ENCODE measurements at regions of chr19 and their contacts with region 1.

Region 1: DNA sequence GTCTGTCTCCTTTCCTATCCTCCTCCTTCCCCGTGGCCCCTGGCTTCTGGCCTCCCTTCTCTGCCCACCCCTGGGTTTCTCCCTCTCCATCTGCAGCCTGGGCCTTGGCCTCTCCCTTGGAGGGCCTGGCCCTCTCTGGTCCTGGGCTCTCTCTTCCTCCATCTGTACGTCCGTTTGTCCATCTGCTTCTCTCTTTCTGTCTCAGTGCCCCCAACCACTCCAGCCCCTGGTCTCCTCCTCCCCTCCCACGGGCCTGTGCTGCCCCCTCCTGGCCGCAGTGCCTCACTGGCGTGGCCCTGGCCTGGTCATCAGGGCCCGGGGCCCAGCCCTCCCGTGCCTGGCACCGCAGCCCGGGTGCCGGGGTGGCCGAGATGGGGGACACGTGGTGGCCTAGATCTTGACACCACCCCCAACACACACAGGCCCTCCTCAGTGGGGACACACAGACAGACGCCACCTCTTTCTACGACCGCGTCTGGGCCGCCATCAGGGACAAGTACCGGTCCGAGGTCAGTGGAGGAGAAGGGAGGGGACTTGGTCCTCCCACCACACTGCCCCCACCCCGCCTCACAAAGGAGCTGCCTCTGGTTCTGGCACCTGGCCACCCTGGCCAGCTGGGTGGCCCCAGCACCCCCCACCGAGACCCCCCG is 11.3 kb downstream of the PRKCSH start:
- DNase-seq: peak in 7 of 9 donors; percentile 26 to 61 (median 44)
- ATAC-seq: peak; percentile 80
- H3K4me3 ChIP-seq: no peak overlapping the region
- H3K4me3 Mint-ChIP-seq: no peak overlapping the region
- H3K27ac ChIP-seq: no peak overlapping the region
- H3K27ac Mint-ChIP-seq: peak overlapping the region in 1 of 9 donors; percentile 36
- H3K4me1 ChIP-seq: no peaks in the 10 kb centered on the region
- H3K4me1 Mint-ChIP-seq: peaks cover 0 to 5% (median 3%) of the 10 kb centered on the region in 7 donors
- H3K27me3 ChIP-seq: no peaks in the 10 kb centered on the region
- H3K27me3 Mint-ChIP-seq: no peaks in the 10 kb centered on the region

Region 2: GRCh38 chr19:11293433-11294389 is 153.1 kb before region 1 on chr19:
- CTCF ChIA-PET with region 1: interaction called, 5 read pairs
- POLR2A ChIA-PET with region 1: no interaction called
- intact Hi-C with region 1: loop called (anchors 1 kb)
- DNase-seq: peak; percentile 55 to 88 (median 75)
- ATAC-seq: peak; percentile 98
- H3K4me3 ChIP-seq: no peak overlapping the region
- H3K4me3 Mint-ChIP-seq: peak overlapping the region in 7 of 10 donors; percentile 13 to 69 (median 60)
- H3K27ac ChIP-seq: no peak overlapping the region
- H3K27ac Mint-ChIP-seq: peak overlapping the region in 2 of 9 donors; percentile 31 to 80
- H3K4me1 ChIP-seq: peaks cover 0 to 4% of the 10 kb centered on the region in 2 donors
- H3K4me1 Mint-ChIP-seq: peaks cover 8 to 11% (median 9%) of the 10 kb centered on the region in 7 donors
- H3K27me3 ChIP-seq: no peaks in the 10 kb centered on the region
- H3K27me3 Mint-ChIP-seq: peaks cover 5 to 69% (median 15%) of the 10 kb centered on the region in 5 donors

Region 3: GRCh38 chr19:11405846-11406643 is 40.7 kb before region 1 on chr19:
- CTCF ChIA-PET with region 1: interaction called, 10 read pairs
- POLR2A ChIA-PET with region 1: no interaction called
- intact Hi-C with region 1: no loop called
- DNase-seq: peak in 5 of 9 donors; percentile 29 to 46 (median 33)
- ATAC-seq: peak; percentile 68
- H3K4me3 ChIP-seq: no peak overlapping the region
- H3K4me3 Mint-ChIP-seq: no peak overlapping the region
- H3K27ac ChIP-seq: no peak overlapping the region
- H3K27ac Mint-ChIP-seq: no peak overlapping the region
- H3K4me1 ChIP-seq: no peaks in the 10 kb centered on the region
- H3K4me1 Mint-ChIP-seq: peaks cover 0 to 5% (median 0%) of the 10 kb centered on the region in 7 donors
- H3K27me3 ChIP-seq: no peaks in the 10 kb centered on the region
- H3K27me3 Mint-ChIP-seq: peaks cover 4 to 20% (median 7%) of the 10 kb centered on the region in 5 donors

Region 4: DNA sequence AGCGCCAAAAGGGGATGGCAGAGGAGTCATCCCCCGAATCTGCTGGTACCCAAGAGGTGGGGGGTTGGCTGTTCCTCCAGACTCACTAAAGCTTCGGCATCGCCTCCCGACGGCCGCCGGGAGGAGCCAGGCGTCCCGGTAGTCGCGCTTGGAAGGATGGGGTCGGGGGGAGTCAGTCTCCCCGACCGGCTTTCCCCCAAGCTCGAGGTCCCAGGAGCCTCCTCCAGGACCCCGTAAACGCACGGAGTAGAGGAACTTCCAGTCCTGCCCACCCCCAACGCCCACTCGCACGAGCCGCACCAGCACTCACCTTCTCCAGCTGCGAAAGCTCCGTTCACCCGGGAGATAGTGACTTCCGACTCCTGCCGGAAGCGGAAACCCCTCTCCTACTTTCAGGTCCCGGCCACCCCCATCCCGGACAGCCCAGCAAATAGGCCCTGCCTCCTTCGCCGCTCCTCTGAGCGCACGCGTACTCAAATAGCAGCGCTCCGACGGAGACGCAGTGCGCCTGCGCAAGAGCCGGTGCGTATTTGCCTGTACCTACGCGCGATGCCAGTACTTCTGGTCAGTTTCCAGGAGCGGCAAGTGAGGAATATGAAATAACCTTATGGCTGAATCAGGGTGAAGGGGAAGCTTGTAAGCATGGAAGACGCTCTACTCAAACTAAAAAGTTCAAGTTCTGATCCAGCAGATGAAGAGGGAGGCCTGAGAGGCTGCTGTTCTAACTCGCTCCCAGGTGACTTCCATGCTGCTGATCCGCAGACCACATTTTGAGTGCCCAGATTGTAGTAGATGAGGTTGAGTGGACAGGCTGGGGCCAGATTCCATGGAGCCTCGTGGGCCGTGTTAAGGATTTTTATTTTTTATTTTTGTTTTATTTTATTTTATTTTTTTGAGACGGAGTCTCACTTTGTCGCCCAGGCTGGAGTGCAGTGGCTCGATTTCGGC is 112.4 kb after region 1 on chr19 and contains the start of gene ELOF1:
- CTCF ChIA-PET with region 1: no interaction called
- POLR2A ChIA-PET with region 1: no interaction called
- intact Hi-C with region 1: no loop called
- DNase-seq: peak; percentile 90 to 97 (median 94)
- ATAC-seq: peak; percentile 97
- H3K4me3 ChIP-seq: peak within 1 kb of the TSS; percentile 94
- H3K4me3 Mint-ChIP-seq: peak within 1 kb of the TSS; percentile 89 to 99 (median 96)
- H3K27ac ChIP-seq: peak within 1 kb of the TSS; percentile 82
- H3K27ac Mint-ChIP-seq: peak within 1 kb of the TSS; percentile 84 to 98 (median 95)
- H3K4me1 ChIP-seq: peaks cover 16 to 19% of the 10 kb centered on the region in 2 donors
- H3K4me1 Mint-ChIP-seq: peaks cover 34 to 58% (median 45%) of the 10 kb centered on the region in 7 donors
- H3K27me3 ChIP-seq: no peaks in the 10 kb centered on the region
- H3K27me3 Mint-ChIP-seq: no peaks in the 10 kb centered on the region
- total RNA-seq, gene ELOF1: 34.0 to 59.8 (median 41.9) TPM

Region 5: GRCh38 chr19:12047868-12048267 is 601.1 kb after region 1 on chr19:
- CTCF ChIA-PET with region 1: no interaction called
- POLR2A ChIA-PET with region 1: no interaction called
- intact Hi-C with region 1: no loop called
- DNase-seq: no peak
- ATAC-seq: no peak
- H3K4me3 ChIP-seq: no peak overlapping the region
- H3K4me3 Mint-ChIP-seq: no peak overlapping the region
- H3K27ac ChIP-seq: no peak overlapping the region
- H3K27ac Mint-ChIP-seq: no peak overlapping the region
- H3K4me1 ChIP-seq: peaks cover 2 to 10% of the 10 kb centered on the region in 2 donors
- H3K4me1 Mint-ChIP-seq: peaks cover 6 to 11% (median 8%) of the 10 kb centered on the region in 7 donors
- H3K27me3 ChIP-seq: no peaks in the 10 kb centered on the region
- H3K27me3 Mint-ChIP-seq: peaks cover 4 to 6% (median 5%) of the 10 kb centered on the region in 5 donors